ENCODE measurements at regions of chr16 and their contacts with region 1.

Region 1: DNA sequence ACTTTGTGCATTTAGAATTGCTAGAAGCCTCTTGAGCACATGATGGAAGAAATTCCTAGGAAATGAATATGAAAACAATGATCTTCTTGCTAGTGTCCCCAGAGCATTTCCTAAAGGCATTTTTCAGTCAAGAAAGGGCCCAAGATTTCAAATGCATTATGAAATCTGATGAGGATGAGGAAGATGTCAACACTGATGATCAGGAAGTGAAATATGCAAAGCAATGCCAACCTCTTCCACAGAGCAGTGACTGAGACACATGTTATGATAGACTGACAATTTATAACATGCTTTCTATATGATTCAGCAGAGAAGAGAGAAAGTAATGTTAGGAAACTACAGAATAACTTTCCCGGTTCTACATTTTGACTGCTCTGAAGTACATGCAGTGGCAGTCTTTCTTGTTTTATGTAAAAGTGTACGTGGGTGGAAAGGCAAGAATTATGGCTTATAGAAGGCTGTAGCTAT is 859.1 kb upstream of the GOT2 start:
- DNase-seq: peak; percentile 5
- H3K4me3 Mint-ChIP-seq: no peak overlapping the region
- H3K27ac Mint-ChIP-seq: no peak overlapping the region
- H3K4me1 Mint-ChIP-seq: peaks cover 14% of the 10 kb centered on the region
- H3K27me3 Mint-ChIP-seq: peaks cover 12% of the 10 kb centered on the region

Region 2: GRCh38 chr16:59459806-59460205 is 133.4 kb before region 1 on chr16:
- CTCF ChIA-PET with region 1: no interaction called
- intact Hi-C with region 1: loop called (anchors 1 kb)
- DNase-seq: no peak
- H3K4me3 Mint-ChIP-seq: no peak overlapping the region
- H3K27ac Mint-ChIP-seq: no peak overlapping the region
- H3K4me1 Mint-ChIP-seq: peaks cover 9% of the 10 kb centered on the region
- H3K27me3 Mint-ChIP-seq: peaks cover 8% of the 10 kb centered on the region